ENCODE measurements at regions of chr1 and their contacts with region 1.

Region 1: DNA sequence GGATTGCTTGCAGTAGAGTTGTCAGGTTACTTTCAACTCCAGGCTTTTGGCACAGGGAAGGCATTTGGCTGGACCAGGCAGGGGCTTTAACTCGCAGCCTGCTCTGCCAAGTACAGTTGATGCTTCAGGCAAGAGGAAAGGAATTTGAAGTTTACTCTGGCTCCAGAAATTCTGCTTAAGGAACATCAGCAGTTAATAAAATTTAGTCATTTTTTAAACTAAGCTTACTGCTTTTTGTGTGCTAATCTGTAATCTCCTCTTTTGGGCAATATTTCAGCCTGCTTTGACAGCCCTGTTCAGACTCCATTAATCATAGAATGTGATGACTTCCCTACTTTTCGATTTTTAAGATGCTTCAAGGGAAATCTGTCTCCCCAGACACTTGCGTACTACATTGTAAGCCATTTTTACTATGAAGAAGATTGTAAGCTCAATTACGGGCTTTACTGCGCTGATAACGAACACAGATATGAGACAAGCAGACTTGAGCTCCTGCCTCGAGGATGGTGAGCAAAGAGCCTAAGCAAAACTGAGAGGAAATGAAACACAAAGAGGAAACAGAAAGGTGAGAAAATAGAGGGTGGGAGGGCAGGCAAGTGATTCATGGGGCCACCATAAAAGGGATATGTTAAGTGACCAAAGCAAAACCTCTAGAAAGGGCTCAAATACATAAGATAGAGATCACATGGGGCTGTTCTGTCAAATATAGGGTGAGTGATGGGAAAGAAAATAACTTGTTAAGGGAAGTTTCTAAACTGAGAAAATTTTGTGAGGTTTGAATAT is 76.6 kb upstream of the VAV3 start:
- DNase-seq: no peak
- ATAC-seq: peak; percentile 54
- H3K4me3 Mint-ChIP-seq: peak overlapping the region; percentile 55
- H3K27ac Mint-ChIP-seq: peak overlapping the region; percentile 82
- H3K4me1 Mint-ChIP-seq: peaks cover 39% of the 10 kb centered on the region
- H3K27me3 Mint-ChIP-seq: no peaks in the 10 kb centered on the region
- CTCF ChIP-seq: no peak

Region 2: GRCh38 chr1:107926436-107927080 is 115.0 kb before region 1 on chr1:
- CTCF ChIA-PET with region 1: no interaction called
- POLR2A ChIA-PET with region 1: no interaction called
- intact Hi-C with region 1: no loop called
- DNase-seq: no peak
- ATAC-seq: no peak
- H3K4me3 Mint-ChIP-seq: no peak overlapping the region
- H3K27ac Mint-ChIP-seq: peak overlapping the region; percentile 15
- H3K4me1 Mint-ChIP-seq: peaks cover 65% of the 10 kb centered on the region
- H3K27me3 Mint-ChIP-seq: no peaks in the 10 kb centered on the region
- CTCF ChIP-seq: no peak

Region 3: GRCh38 chr1:108009603-108010195 is 31.9 kb before region 1 on chr1:
- CTCF ChIA-PET with region 1: no interaction called
- POLR2A ChIA-PET with region 1: no interaction called
- intact Hi-C with region 1: loop called (anchors 5 kb)
- DNase-seq: no peak
- ATAC-seq: no peak
- H3K4me3 Mint-ChIP-seq: no peak overlapping the region
- H3K27ac Mint-ChIP-seq: no peak overlapping the region
- H3K4me1 Mint-ChIP-seq: peaks cover 39% of the 10 kb centered on the region
- H3K27me3 Mint-ChIP-seq: no peaks in the 10 kb centered on the region
- CTCF ChIP-seq: no peak

Region 4: GRCh38 chr1:108075055-108075454 is 33.5 kb after region 1 on chr1:
- CTCF ChIA-PET with region 1: no interaction called
- POLR2A ChIA-PET with region 1: interaction called, 3 read pairs
- intact Hi-C with region 1: loop called (anchors 2 kb)
- DNase-seq: no peak
- ATAC-seq: peak; percentile 87
- H3K4me3 Mint-ChIP-seq: no peak overlapping the region
- H3K27ac Mint-ChIP-seq: peak overlapping the region; percentile 37
- H3K4me1 Mint-ChIP-seq: peaks cover 61% of the 10 kb centered on the region
- H3K27me3 Mint-ChIP-seq: no peaks in the 10 kb centered on the region
- CTCF ChIP-seq: no peak